B cell (primary cell): ENCODE measurements at regions of chr6 and their contacts with region 1.

Region 1: GRCh38 chr6:131909408-131910218 is 41.6 kb downstream of the CCN2 start:
- DNase-seq: peak; percentile 79
- ATAC-seq: peak; percentile 94
- H3K4me3 ChIP-seq: no peak overlapping the region
- H3K4me3 Mint-ChIP-seq: no peak overlapping the region
- H3K27ac ChIP-seq: no peak overlapping the region
- H3K27ac Mint-ChIP-seq: no peak overlapping the region
- H3K4me1 ChIP-seq: peaks cover 0 to 5% of the 10 kb centered on the region in 2 donors
- H3K4me1 Mint-ChIP-seq: peaks cover 6% of the 10 kb centered on the region
- H3K27me3 ChIP-seq: peaks cover 0 to 13% (median 5%) of the 10 kb centered on the region in 4 experiments
- H3K27me3 Mint-ChIP-seq: peaks cover 33% of the 10 kb centered on the region
- CTCF ChIP-seq: peak; percentile 98

Region 2: DNA sequence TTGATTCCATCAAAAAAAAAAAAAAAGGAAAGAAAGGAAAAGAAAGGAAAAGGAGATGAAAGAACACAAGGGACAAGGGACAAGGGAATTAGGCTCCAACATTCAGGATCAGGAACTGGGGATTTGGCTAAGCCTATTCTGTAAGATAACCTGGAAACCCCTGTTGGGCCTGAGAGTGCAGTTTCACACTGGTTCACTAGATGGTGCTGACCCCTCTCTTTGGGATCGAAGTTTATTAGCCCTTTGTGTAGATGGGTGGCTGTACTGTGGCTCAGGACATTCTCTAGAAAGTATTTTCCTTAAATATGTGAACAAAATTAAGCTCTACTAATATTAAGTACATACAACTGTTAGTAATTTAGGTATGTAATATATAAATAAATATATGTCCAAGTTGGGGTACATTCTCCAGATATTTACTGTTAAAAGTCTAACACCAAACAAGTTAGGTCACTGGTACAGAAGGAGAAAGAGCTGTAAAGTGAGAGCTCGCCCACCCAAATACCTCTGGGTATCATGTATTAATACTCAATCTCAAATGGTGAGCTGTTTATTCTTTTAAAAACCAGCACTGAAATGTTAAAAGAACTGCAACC is 214.7 kb before region 1 on chr6:
- CTCF ChIA-PET with region 1: interaction called, 72 read pairs
- POLR2A ChIA-PET with region 1: no interaction called
- intact Hi-C with region 1: loop called (anchors 1 kb)
- DNase-seq: peak; percentile 65
- ATAC-seq: peak; percentile 82
- H3K4me3 ChIP-seq: no peak overlapping the region
- H3K4me3 Mint-ChIP-seq: no peak overlapping the region
- H3K27ac ChIP-seq: no peak overlapping the region
- H3K27ac Mint-ChIP-seq: no peak overlapping the region
- H3K4me1 ChIP-seq: peaks cover 18 to 24% of the 10 kb centered on the region in 2 donors
- H3K4me1 Mint-ChIP-seq: peaks cover 21% of the 10 kb centered on the region
- H3K27me3 ChIP-seq: no peaks in the 10 kb centered on the region
- H3K27me3 Mint-ChIP-seq: no peaks in the 10 kb centered on the region
- CTCF ChIP-seq: peak; percentile 74

Region 3: DNA sequence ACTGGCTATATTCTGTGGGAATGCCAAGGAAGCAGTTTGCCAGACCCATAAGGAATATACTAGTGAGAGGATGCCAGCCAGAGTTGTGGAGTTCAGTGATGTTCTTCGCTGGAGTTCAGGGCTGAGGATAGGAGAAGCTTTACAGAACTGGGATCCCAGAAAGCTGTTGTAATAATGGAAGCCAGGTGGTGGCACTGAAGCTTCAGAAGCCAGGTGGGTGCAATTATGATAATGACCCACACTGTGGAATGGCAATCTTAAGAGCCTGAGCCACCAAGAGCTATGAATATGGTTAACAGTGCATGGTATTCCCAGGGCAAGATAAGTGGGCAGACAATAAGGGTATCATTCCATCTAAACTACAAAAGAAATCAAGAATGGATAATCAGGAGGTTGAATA is 126.8 kb before region 1 on chr6:
- CTCF ChIA-PET with region 1: interaction called, 12 read pairs
- POLR2A ChIA-PET with region 1: no interaction called
- intact Hi-C with region 1: no loop called
- DNase-seq: no peak
- ATAC-seq: no peak
- H3K4me3 ChIP-seq: no peak overlapping the region
- H3K4me3 Mint-ChIP-seq: no peak overlapping the region
- H3K27ac ChIP-seq: no peak overlapping the region
- H3K27ac Mint-ChIP-seq: no peak overlapping the region
- H3K4me1 ChIP-seq: no peaks in the 10 kb centered on the region
- H3K4me1 Mint-ChIP-seq: no peaks in the 10 kb centered on the region
- H3K27me3 ChIP-seq: no peaks in the 10 kb centered on the region
- H3K27me3 Mint-ChIP-seq: peaks cover 10% of the 10 kb centered on the region
- CTCF ChIP-seq: no peak

Region 4: GRCh38 chr6:131822119-131822518 is 87.5 kb before region 1 on chr6:
- CTCF ChIA-PET with region 1: no interaction called
- POLR2A ChIA-PET with region 1: no interaction called
- intact Hi-C with region 1: no loop called
- DNase-seq: no peak
- ATAC-seq: no peak
- H3K4me3 ChIP-seq: no peak overlapping the region
- H3K4me3 Mint-ChIP-seq: no peak overlapping the region
- H3K27ac ChIP-seq: no peak overlapping the region
- H3K27ac Mint-ChIP-seq: no peak overlapping the region
- H3K4me1 ChIP-seq: no peaks in the 10 kb centered on the region
- H3K4me1 Mint-ChIP-seq: no peaks in the 10 kb centered on the region
- H3K27me3 ChIP-seq: peaks cover 0 to 4% (median 0%) of the 10 kb centered on the region in 4 experiments
- H3K27me3 Mint-ChIP-seq: peaks cover 29% of the 10 kb centered on the region
- CTCF ChIP-seq: no peak

Region 5: GRCh38 chr6:131923356-131923755 is 13.7 kb after region 1 on chr6:
- CTCF ChIA-PET with region 1: interaction called, 34 read pairs
- POLR2A ChIA-PET with region 1: no interaction called
- intact Hi-C with region 1: no loop called
- DNase-seq: peak; percentile 62
- ATAC-seq: peak; percentile 53
- H3K4me3 ChIP-seq: no peak overlapping the region
- H3K4me3 Mint-ChIP-seq: no peak overlapping the region
- H3K27ac ChIP-seq: no peak overlapping the region
- H3K27ac Mint-ChIP-seq: no peak overlapping the region
- H3K4me1 ChIP-seq: no peaks in the 10 kb centered on the region
- H3K4me1 Mint-ChIP-seq: no peaks in the 10 kb centered on the region
- H3K27me3 ChIP-seq: peaks cover 0 to 13% (median 0%) of the 10 kb centered on the region in 4 experiments
- H3K27me3 Mint-ChIP-seq: peaks cover 4% of the 10 kb centered on the region
- CTCF ChIP-seq: peak; percentile 67

Region 6: DNA sequence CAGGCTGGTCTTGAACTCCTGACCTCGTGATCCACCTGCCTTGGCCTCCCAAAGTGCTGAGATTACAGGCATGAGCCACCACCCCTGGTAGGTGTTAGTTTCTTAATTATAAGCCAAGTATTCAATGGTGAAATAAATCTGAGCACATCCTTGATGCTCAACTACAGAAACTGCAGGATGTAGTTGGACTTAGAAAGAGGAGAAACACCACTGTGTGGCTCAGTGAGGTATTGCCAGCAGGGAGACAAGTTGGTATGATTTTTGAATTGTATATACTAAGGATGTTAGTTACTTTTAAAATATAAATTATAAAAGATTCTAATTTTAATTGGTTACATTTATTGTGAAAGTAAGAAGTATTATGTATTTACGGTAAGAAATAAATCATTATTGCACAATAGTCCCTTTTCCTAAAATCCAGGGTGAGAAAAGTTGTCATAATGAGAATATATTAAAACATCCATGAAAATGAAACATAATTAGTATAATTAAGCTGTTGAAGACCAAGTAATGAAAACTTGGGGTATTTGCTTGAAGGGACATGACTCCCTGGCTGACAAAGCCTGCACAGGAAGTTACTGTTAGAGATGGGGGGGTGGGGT is 871.3 kb after region 1 on chr6:
- CTCF ChIA-PET with region 1: no interaction called
- POLR2A ChIA-PET with region 1: no interaction called
- intact Hi-C with region 1: no loop called
- DNase-seq: no peak
- ATAC-seq: peak; percentile 36
- H3K4me3 ChIP-seq: no peak overlapping the region
- H3K4me3 Mint-ChIP-seq: no peak overlapping the region
- H3K27ac ChIP-seq: no peak overlapping the region
- H3K27ac Mint-ChIP-seq: no peak overlapping the region
- H3K4me1 ChIP-seq: no peaks in the 10 kb centered on the region
- H3K4me1 Mint-ChIP-seq: no peaks in the 10 kb centered on the region
- H3K27me3 ChIP-seq: no peaks in the 10 kb centered on the region
- H3K27me3 Mint-ChIP-seq: no peaks in the 10 kb centered on the region
- CTCF ChIP-seq: peak; percentile 47

Region 7: DNA sequence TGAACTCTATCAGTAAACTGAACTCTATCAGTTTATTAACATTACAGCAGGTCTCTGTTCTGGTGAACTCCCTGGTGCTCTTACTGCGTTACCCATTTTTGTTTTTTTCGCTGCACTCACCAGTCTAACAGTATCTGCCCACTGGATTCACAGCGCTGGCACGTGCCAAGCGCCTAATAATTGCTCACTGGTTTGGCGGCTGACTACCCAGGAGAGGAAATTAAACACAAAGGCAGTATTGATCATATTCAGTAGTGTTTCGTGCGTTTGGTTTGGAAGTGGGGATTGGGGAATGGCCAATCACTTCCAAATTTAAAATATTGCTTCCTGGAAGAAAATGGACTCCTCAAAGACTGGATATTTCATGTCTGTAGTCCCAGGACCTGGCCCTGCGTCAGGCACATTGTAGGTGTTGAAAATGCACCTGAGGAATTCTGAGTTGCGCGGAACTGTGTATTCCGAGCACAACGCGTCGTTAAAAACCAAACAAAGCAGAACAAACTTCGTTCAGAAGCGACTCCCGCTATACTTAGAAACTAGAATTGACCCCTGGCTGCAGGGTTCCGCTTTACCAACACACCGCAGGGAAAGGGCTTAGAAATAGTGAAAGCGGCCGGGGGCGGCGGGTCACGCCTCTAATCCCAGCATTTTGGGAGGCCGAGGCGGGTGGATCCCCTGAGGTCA is 903.7 kb after region 1 on chr6:
- CTCF ChIA-PET with region 1: no interaction called
- POLR2A ChIA-PET with region 1: no interaction called
- intact Hi-C with region 1: loop called (anchors 10 kb)
- DNase-seq: peak; percentile 75
- ATAC-seq: peak; percentile 18
- H3K4me3 ChIP-seq: peak overlapping the region; percentile 72 to 100 (median 83)
- H3K4me3 Mint-ChIP-seq: peak overlapping the region; percentile 98
- H3K27ac ChIP-seq: peak overlapping the region; percentile 65 to 82
- H3K27ac Mint-ChIP-seq: peak overlapping the region; percentile 98
- H3K4me1 ChIP-seq: peaks cover 25% of the 10 kb centered on the region in 2 donors
- H3K4me1 Mint-ChIP-seq: peaks cover 47% of the 10 kb centered on the region
- H3K27me3 ChIP-seq: no peaks in the 10 kb centered on the region
- H3K27me3 Mint-ChIP-seq: no peaks in the 10 kb centered on the region
- CTCF ChIP-seq: no peak